ENCODE measurements at regions of chr3 and their contacts with region 1.

Region 1: DNA sequence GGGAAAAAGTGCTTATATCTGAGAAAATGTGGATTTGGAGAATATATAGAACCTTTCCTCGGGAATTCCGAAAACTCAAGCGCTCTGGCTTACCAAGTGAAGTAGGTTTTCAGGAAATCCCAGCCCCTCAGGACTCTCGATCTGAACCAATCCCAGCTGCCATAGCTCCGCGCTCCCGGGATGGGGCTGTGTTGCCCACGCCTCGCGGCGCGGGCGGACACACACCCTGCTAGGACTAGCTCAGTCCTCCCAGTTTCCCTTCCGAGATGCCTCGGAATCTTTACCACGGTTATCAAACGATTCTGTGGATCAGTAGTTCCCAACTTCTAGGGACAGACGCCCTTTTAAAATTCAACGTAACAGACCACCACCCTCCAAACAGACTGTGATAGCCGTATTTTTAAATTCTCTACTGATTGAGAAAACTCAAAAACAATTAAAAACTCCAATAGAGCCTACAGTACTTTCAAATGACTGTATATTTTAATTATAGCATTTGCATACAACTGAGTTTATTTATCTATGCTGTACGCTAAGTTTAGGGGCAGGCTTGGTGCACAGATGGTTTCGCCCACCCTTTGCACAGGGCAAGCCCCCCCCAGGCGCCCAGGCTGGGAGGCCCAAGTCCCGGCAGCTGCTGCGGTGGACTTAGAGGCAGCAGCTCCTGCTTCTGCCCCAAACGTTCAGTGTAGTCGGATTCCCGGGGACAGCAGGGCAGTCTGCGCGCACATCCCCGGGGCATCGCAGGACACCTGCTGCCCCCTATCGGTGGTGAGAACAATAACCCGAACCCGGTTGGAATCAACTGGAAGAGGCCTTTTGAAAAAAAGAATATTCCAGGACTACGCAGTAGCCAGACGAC is 52.3 kb downstream of the CCDC54 start:
- DNase-seq: peak; percentile 70
- H3K4me3 Mint-ChIP-seq: peak overlapping the region; percentile 74
- H3K27ac Mint-ChIP-seq: no peak overlapping the region
- H3K4me1 Mint-ChIP-seq: peaks cover 12% of the 10 kb centered on the region
- H3K27me3 Mint-ChIP-seq: peaks cover 10% of the 10 kb centered on the region

Region 2: DNA sequence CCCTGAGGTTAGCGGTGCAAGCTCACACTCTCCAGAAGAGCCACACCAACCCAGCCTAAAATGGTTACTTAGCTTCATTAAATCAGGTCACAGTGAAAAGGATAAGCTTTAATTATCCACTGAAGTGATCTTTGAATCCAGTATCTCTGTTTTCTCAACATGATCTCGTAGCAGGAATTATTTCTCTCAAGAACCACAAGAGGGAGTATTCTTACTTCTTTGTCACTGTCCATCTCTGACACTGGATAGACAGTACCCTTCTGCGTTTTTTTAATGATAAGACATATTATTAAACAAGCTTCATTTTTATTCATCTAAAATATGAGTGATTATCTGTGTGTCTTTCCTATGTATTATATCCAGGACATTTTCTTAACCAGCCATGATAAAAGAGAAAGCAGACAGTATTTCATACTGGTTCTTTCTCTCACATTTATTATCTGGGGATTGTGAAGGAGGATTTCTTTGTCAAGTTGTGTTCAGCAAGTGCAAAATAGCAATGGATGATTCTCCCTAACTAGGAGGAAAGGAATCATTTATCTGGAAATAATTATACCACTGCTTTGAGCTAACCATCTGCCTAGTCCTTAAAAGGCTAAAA is 157.7 kb before region 1 on chr3:
- CTCF ChIA-PET with region 1: interaction called, 19 read pairs
- intact Hi-C with region 1: loop called (anchors 1 kb)
- DNase-seq: no peak
- H3K4me3 Mint-ChIP-seq: no peak overlapping the region
- H3K27ac Mint-ChIP-seq: no peak overlapping the region
- H3K4me1 Mint-ChIP-seq: no peaks in the 10 kb centered on the region
- H3K27me3 Mint-ChIP-seq: peaks cover 8% of the 10 kb centered on the region

Region 3: DNA sequence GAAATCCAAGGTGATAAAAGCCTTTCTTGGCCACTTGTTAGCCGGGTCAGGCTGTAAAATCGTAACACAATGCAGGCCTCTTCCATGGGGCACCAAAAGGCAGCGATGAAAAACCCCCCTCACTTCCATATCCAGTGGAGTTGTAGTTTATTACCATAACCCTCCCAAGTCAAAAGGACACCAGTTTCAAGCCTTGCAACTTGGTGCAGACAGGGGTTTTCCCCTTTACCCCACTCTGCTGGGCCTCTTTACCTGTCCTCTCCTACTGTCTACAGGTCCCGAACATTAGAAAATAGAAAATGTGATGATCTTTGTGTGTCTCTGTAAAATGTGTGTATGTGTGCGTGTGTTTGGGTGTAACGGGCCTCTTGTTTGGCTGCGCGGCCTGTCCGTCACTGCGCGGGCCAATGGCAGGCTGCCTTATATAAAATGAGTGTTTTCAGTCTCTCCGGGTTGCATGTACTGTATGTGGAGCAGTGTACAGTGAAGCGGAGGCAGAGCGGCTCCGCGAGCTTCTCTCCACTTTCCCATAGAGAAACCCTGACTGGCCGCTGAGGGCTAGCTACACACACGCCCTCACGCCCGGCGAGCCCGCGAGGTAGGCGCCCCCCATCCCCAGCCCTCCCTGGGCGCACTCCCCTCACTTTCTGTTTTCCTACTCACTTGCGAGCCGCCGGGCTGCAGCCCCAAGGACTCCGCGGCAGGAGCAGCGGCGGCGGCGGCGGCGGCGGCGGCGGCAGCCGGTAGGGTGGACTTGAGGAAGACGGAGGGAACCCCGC is 93.1 kb after region 1 on chr3 and contains the start of gene BBX:
- CTCF ChIA-PET with region 1: interaction called, 3 read pairs
- intact Hi-C with region 1: loop called (anchors 1 kb)
- DNase-seq: peak; percentile 94
- H3K4me3 Mint-ChIP-seq: peak within 1 kb of the TSS; percentile 92
- H3K27ac Mint-ChIP-seq: peak within 1 kb of the TSS; percentile 94
- H3K4me1 Mint-ChIP-seq: peaks cover 23% of the 10 kb centered on the region
- H3K27me3 Mint-ChIP-seq: no peaks in the 10 kb centered on the region
- total RNA-seq, gene BBX: 43.1 to 48.6 TPM

Region 4: DNA sequence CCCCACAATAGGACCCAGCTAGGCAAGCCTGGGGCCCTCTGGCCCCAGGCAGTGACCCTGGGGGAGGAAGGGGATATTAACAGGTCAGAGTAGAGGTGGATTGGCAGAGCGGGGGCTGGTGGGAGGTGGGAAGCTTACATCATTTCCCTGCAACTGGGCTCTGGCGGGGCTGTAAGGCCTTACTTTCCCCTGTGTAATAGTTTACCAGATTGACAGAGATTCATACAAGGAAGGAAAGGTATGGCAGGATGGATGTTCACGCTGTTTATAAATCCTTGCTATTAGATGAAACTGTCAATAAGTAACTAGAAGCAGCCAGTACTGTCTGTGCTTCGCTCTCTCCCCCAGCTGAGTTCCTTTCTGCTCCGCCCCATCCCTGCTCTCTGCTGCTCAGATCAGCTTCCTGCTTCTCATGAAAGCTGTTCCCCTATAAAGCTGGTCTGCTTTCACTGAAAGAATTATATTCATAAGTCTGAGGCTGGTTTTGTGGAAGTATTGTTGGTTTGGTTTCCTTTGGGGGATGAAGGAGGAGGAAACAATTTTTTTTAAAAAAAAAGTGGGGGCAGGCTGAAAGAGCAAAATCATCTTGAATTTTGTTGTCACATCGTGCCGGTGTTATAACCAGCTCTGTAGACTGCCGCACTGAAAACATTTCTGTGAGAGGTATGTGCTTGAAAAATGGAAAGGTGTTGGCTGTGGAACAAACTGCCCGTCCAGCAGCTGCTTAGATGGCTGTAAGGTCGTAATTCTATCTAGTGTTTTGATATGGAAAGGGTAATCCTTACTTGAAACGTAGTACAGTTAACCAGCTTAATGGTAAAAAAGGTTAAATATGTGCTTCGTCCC is 169.6 kb after region 1 on chr3:
- CTCF ChIA-PET with region 1: no interaction called
- intact Hi-C with region 1: loop called (anchors 2 kb)
- DNase-seq: peak; percentile 61
- H3K4me3 Mint-ChIP-seq: peak overlapping the region; percentile 79
- H3K27ac Mint-ChIP-seq: peak overlapping the region; percentile 85
- H3K4me1 Mint-ChIP-seq: peaks cover 50% of the 10 kb centered on the region
- H3K27me3 Mint-ChIP-seq: no peaks in the 10 kb centered on the region

Region 5: GRCh38 chr3:108301695-108302404 is 872.3 kb after region 1 on chr3:
- CTCF ChIA-PET with region 1: no interaction called
- intact Hi-C with region 1: loop called (anchors 5 kb)
- DNase-seq: peak; percentile 26
- H3K4me3 Mint-ChIP-seq: peak overlapping the region; percentile 48
- H3K27ac Mint-ChIP-seq: peak overlapping the region; percentile 59
- H3K4me1 Mint-ChIP-seq: peaks cover 45% of the 10 kb centered on the region
- H3K27me3 Mint-ChIP-seq: no peaks in the 10 kb centered on the region

Measured in activated naive CD4-positive, alpha-beta T cell treated with anti-CD3 and anti-CD28 coated beads for 36 hours (primary cell).